H1 (cell line): ENCODE measurements at regions of chr3 and their contacts with region 1.

Region 1: GRCh38 chr3:14548321-14548729 is 8.2 kb upstream of the GRIP2 start:
- DNase-seq: peak; percentile 23 to 76
- H3K4me3 ChIP-seq: no peak overlapping the region
- H3K27ac ChIP-seq: no peak overlapping the region
- H3K4me1 ChIP-seq: peaks cover 0 to 3% (median 0%) of the 10 kb centered on the region in 4 experiments; a peak in 1 of 7 replicates
- H3K27me3 ChIP-seq: no peaks in the 10 kb centered on the region
- CTCF ChIP-seq: peak; percentile 92 to 97 (median 94)
- EP300 ChIP-seq: no peak
- POLR2A ChIP-seq: no peak
- RAD21 ChIP-seq: peak; percentile 81 to 91

Region 2: GRCh38 chr3:14508961-14509795 is 39.1 kb before region 1 on chr3:
- CTCF ChIA-PET with region 1: interaction called, 280 read pairs
- POLR2A ChIA-PET with region 1: interaction called, 7 read pairs
- DNase-seq: peak; percentile 78 to 100
- H3K4me3 ChIP-seq: peak overlapping the region in 3 of 4 experiments; percentile 33 to 55 (median 47); a peak in 6 of 8 replicates
- H3K27ac ChIP-seq: no peak overlapping the region
- H3K4me1 ChIP-seq: peaks cover 0 to 8% (median 5%) of the 10 kb centered on the region in 4 experiments; a peak in 4 of 7 replicates
- H3K27me3 ChIP-seq: no peaks in the 10 kb centered on the region
- CTCF ChIP-seq: peak in 2 of 3 experiments; percentile 86 to 91; a peak in 3 of 4 replicates
- EP300 ChIP-seq: no peak
- POLR2A ChIP-seq: no peak
- RAD21 ChIP-seq: peak; percentile 91

Region 3: GRCh38 chr3:14532691-14533456 is 15.5 kb before region 1 on chr3:
- CTCF ChIA-PET with region 1: interaction called, 171 read pairs
- POLR2A ChIA-PET with region 1: interaction called, 4 read pairs
- DNase-seq: peak; percentile 77 to 88
- H3K4me3 ChIP-seq: peak overlapping the region in 1 of 4 experiments; percentile 16; a peak in 1 of 8 replicates
- H3K27ac ChIP-seq: no peak overlapping the region
- H3K4me1 ChIP-seq: peaks cover 8 to 39% (median 30%) of the 10 kb centered on the region in 4 experiments
- H3K27me3 ChIP-seq: no peaks in the 10 kb centered on the region
- CTCF ChIP-seq: no peak
- EP300 ChIP-seq: no peak
- POLR2A ChIP-seq: no peak
- RAD21 ChIP-seq: no peak

Region 4: GRCh38 chr3:14583548-14584091 is 35.3 kb after region 1 on chr3:
- CTCF ChIA-PET with region 1: interaction called, 10 read pairs
- POLR2A ChIA-PET with region 1: no interaction called
- DNase-seq: no peak
- H3K4me3 ChIP-seq: no peak overlapping the region
- H3K27ac ChIP-seq: no peak overlapping the region
- H3K4me1 ChIP-seq: no peaks in the 10 kb centered on the region
- H3K27me3 ChIP-seq: no peaks in the 10 kb centered on the region
- CTCF ChIP-seq: no peak
- EP300 ChIP-seq: no peak
- POLR2A ChIP-seq: no peak
- RAD21 ChIP-seq: no peak

Region 5: GRCh38 chr3:14602006-14602803 is 53.9 kb after region 1 on chr3:
- CTCF ChIA-PET with region 1: interaction called, 54 read pairs
- POLR2A ChIA-PET with region 1: no interaction called
- DNase-seq: peak in 1 of 2 experiments; percentile 67
- H3K4me3 ChIP-seq: peak overlapping the region; percentile 45 to 73 (median 52)
- H3K27ac ChIP-seq: no peak overlapping the region
- H3K4me1 ChIP-seq: peaks cover 0 to 12% (median 9%) of the 10 kb centered on the region in 4 experiments; a peak in 6 of 7 replicates
- H3K27me3 ChIP-seq: peaks cover 0 to 14% (median 10%) of the 10 kb centered on the region in 4 experiments; a peak in 5 of 7 replicates
- CTCF ChIP-seq: peak; percentile 38 to 43 (median 41)
- EP300 ChIP-seq: no peak
- POLR2A ChIP-seq: no peak
- RAD21 ChIP-seq: peak in 1 of 2 experiments; percentile 21; a peak in 1 of 4 replicates

Region 6: GRCh38 chr3:14757153-14757700 is 208.9 kb after region 1 on chr3:
- CTCF ChIA-PET with region 1: no interaction called
- POLR2A ChIA-PET with region 1: no interaction called
- DNase-seq: peak in 1 of 2 experiments; percentile 41
- H3K4me3 ChIP-seq: no peak overlapping the region
- H3K27ac ChIP-seq: no peak overlapping the region
- H3K4me1 ChIP-seq: peaks cover 0 to 3% (median 0%) of the 10 kb centered on the region in 4 experiments; a peak in 1 of 7 replicates
- H3K27me3 ChIP-seq: no peaks in the 10 kb centered on the region; a peak in 1 of 7 replicates
- CTCF ChIP-seq: no peak
- EP300 ChIP-seq: no peak
- POLR2A ChIP-seq: no peak
- RAD21 ChIP-seq: peak in 1 of 2 experiments; percentile 17; a peak in 2 of 4 replicates